Prostate gland (tissue), 2 donors: ENCODE measurements at regions of chr11 and their contacts with region 1.

Region 1: DNA sequence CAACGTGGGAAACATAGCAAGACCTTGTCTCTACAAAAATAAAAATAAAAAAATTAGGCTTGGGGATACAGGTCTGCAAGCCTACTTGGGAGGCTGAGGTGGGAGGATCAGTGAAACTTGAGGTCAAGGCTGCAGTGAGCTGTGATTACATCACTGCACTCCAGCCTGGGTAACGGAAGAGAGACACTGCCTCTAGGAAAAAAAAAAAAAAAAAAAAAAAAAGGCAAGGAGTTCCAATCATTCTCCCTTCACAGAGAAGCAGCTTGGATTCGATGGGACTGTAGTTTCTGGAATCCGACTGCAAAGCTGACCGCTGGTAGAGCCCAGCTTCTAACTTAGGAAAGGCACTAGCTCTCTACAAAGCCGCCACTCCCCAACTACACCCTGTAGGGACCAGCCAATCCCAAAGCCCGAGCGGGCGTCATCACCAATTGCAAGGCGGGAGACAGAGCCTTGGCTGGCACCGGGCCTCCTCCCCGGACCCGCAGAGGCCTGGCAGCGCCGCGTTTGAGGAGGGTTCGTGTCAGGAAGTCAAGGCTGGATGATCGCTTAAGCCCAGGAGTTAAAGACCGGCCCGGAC is 699 bp upstream of the DDB2 start:
- DNase-seq: peak; percentile 90
- H3K4me3 ChIP-seq: peak overlapping the region; percentile 46 to 47
- H3K27ac ChIP-seq: peak overlapping the region; percentile 94 to 95
- H3K4me1 ChIP-seq: peaks cover 15% of the 10 kb centered on the region
- H3K27me3 ChIP-seq: no peaks in the 10 kb centered on the region
- CTCF ChIP-seq: peak in 1 of 4 experiments; percentile 6
- POLR2A ChIP-seq: peak; percentile 70

Region 2: DNA sequence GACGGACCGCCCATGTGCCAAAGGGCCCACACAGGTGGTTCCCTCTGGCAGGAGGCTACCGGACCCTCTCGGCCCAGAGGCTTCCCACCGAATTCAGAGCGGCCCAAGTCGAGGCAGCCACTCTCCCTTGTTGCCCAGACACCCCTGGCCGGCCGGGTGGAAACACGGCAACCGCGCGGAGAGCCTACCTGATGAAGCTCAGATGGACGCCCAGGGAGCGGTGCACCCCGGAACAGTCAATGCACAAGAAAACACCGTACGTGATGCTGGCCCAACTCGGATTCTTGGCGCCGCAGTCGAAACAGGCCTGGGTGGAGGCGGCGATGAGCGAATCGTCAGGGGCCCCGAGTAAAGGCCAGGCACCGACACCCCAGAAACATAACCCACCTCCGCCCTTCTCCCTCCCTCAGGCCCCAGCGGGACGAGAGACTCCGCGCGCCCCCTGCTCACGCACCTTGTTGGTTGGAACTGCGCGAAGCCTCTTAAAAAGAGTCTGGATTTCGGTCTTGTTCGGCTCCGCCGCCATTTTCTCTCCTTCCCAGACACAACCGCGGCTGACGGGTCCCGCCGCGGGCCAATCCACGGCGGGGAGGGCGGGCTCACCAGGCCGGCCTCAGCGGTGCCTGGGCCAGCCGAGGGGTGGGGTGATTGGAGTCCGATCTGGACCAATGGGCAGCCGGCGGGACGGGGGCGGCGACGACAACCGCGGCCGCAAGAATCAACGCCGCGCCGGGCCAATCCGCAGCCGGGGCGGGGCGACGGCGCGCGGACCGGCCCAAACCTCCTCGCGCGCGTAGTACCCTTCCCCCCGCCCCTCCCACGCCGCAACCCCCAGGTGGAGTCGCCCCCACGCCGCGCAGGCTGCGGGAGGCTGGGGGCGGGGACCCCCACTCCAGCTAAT is 37.5 kb before region 1 on chr11 and contains the start of gene ARFGAP2:
- intact Hi-C with region 1: loop called (anchors 5 kb)
- DNase-seq: peak; percentile 98
- H3K4me3 ChIP-seq: peak within 1 kb of the TSS; percentile 72 to 84
- H3K27ac ChIP-seq: peak within 1 kb of the TSS; percentile 97 to 100
- H3K4me1 ChIP-seq: peaks cover 16% of the 10 kb centered on the region
- H3K27me3 ChIP-seq: no peaks in the 10 kb centered on the region
- CTCF ChIP-seq: peak in 1 of 4 experiments; percentile 3
- POLR2A ChIP-seq: peak; percentile 32
- total RNA-seq, gene ARFGAP2: 111 to 146 TPM

Region 3: DNA sequence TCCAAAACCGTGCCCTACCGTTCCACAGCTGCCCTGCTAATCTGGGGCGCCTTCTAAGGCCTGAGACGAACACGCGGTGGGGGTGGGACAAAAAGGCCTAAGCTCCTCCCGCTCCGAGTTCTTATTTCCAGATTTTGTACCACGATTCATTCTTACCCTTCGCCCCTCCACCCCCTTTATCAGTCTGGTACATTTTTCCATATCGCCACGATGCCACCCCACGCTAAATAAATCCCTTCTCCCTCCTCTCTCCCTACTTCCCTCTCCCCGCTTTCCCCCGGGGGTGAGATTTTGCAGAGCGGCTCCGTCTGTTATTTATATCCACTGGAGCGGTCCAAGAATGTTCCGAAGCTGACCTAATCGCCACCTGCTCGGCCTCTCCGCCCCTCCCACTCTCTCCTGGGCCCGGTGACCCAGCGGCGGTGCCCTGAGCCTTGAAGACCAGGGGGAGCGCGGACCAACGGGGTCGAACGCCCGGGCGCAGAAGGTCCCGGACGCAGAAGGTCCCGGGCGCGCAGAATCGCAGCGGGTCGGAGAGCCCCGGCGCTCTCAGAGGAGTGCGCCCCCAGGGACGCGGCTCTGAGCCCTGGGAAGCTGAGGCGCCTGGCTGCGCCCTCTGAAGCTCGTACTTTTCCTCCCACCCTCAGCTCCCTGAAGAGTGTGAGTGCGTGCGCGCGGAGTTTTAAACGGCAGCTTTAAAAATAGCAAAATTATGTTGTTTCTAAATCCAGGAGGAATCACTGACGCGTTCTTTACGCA is 27.0 kb before region 1 on chr11:
- intact Hi-C with region 1: loop called (anchors 1 kb)
- DNase-seq: no peak
- H3K4me3 ChIP-seq: peak overlapping the region; percentile 91
- H3K27ac ChIP-seq: peak overlapping the region; percentile 91 to 94
- H3K4me1 ChIP-seq: peaks cover 7% of the 10 kb centered on the region
- H3K27me3 ChIP-seq: no peaks in the 10 kb centered on the region
- CTCF ChIP-seq: peak in 1 of 4 experiments; percentile 23
- POLR2A ChIP-seq: no peak

Region 4: DNA sequence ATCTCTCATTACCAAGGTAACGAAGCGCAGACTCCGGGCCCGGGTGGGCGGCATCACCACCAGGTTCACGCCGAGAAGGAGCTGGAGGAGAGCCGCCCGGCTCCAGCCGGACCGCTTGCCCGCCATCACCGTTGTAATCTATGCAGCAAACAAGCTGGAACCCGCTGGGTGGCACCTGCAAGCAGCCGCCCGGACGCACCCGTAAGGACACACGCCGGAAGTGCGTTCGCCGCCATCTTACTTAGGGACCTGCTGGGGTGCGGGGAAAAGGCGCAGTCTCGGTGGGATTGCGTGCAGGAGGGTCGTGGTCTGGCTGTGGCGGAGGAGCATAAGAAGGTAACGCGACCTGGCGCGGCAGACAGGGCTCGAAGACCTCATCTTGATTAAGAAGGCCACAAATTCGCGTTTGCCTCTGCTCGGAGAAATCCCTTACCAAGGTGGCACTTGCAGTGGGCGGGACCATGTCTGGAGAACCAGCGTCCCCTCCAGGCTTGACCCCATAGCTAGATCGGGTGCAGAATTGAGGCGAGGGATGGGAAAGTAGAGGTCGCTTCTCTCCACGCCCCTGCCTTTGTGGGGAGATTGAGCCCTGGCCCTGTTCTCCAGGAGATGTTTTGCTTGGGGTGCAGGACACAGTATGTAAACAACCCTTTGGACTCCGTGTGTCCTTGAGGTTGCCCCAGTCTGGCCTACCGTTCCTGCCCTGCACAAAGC is 34.7 kb after region 1 on chr11 and contains the start of gene ACP2:
- intact Hi-C with region 1: loop called (anchors 2 kb)
- DNase-seq: peak; percentile 90
- H3K4me3 ChIP-seq: peak within 1 kb of the TSS; percentile 68 to 72
- H3K27ac ChIP-seq: peak within 1 kb of the TSS; percentile 78 to 82
- H3K4me1 ChIP-seq: peaks cover 5% of the 10 kb centered on the region
- H3K27me3 ChIP-seq: no peaks in the 10 kb centered on the region
- CTCF ChIP-seq: peak in 2 of 4 experiments; percentile 34 to 41
- POLR2A ChIP-seq: peak; percentile 53
- total RNA-seq, gene ACP2: 94.6 to 104 TPM